Activated B cell treated with CpG ODN at 0.5 μM for 24 hours (primary cell): ENCODE measurements at regions of chr1 and their contacts with region 1.

Region 1: DNA sequence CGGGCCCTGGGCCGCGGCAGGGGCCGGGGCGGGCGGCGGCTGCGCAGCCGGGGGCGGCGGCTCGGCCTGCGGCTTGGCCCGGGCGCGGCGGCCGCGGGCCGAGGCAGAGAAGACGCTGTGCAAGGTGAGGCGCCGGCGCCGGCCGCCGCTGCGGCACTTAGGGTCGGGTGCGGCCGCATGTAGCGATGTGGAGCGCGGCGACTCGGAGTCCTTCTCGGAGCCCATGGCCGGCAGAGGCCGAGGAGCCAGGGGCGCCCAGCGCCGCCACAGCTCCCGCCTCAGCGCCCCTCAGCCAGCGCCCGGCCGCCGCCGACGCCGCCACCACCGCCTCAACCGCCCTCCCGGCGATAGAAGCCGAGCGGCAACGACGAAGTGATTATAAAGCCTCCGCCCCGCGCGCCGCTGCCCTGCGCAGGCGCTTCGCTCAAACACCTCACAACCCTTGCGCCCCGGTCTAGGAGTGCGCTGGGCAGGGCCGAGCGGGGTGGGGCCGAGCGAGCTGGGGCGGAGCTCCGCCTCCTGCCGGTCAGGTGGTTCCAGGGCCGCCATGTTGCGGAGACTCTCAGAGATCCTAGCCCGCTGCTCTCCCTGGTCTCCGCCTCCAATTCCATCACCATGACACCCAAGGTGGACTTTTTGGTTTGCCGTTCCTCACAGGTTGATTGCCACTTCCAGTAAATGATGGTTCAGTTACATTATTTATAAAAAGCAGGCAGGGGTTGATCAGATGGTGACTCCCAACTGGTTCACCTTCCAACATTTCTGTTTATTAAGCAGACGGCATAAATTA is at the start of gene RNF19B:
- DNase-seq: peak; percentile 92
- ATAC-seq: peak; percentile 91
- H3K4me3 Mint-ChIP-seq: peak within 1 kb of the TSS; percentile 90
- H3K27ac Mint-ChIP-seq: peak within 1 kb of the TSS; percentile 91
- H3K4me1 Mint-ChIP-seq: peaks cover 37% of the 10 kb centered on the region
- H3K27me3 Mint-ChIP-seq: no peaks in the 10 kb centered on the region
- CTCF ChIP-seq: no peak
- total RNA-seq, gene RNF19B: 22.7 and 23.6 TPM in 2 replicates

Region 2: GRCh38 chr1:32953495-32953894 is 11.2 kb before region 1 on chr1:
- CTCF ChIA-PET with region 1: interaction called, 7 read pairs
- POLR2A ChIA-PET with region 1: interaction called, 20 read pairs
- intact Hi-C with region 1: loop called (anchors 2 kb)
- DNase-seq: no peak
- ATAC-seq: no peak
- H3K4me3 Mint-ChIP-seq: peak overlapping the region; percentile 19
- H3K27ac Mint-ChIP-seq: no peak overlapping the region
- H3K4me1 Mint-ChIP-seq: peaks cover 72% of the 10 kb centered on the region
- H3K27me3 Mint-ChIP-seq: no peaks in the 10 kb centered on the region
- CTCF ChIP-seq: no peak

Region 3: DNA sequence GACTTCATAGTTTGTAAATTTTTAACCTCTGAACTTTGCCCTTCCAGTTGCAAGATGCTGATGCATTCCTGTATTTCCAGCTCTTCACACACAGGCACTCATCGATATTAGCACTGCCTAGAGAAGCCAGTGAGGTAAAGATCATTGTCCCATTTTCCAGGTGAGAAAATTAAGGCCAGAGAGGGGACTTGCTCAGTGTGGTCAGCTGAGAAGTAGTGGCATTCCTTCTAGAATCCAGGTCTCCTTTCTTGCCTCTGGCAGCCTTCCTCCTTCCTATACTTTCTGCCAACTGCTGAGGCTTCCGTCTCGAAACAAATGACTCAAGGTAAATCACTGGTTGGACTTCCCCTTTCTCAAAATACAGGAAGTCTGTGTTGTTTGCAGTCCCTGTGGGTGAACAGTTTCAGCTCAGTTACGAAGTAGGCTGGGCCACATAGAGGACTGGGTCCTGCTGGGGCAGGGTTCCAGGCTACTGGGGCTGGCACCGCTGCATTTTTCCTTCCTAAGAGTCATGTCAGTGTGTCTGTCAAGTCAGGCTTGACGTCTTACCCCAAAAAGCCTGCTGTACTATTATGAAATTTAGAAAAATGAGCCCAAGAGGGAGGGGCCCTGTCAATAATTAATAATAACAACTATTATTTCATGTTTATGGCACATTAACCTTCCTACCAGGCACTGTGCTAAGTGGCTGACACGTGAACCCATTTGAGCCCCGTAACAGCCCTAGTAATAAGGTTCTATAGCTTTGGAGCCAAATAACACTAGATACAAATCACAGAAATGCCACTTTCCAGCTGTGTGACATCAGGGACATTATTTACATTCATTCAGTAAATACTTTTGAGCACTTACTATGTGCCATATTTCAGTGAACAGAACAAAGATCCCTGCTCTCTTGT is 16.6 kb after region 1 on chr1:
- CTCF ChIA-PET with region 1: interaction called, 3 read pairs
- POLR2A ChIA-PET with region 1: interaction called, 81 read pairs
- intact Hi-C with region 1: loop called (anchors 1 kb)
- DNase-seq: peak; percentile 46
- ATAC-seq: peak; percentile 93
- H3K4me3 Mint-ChIP-seq: peak overlapping the region; percentile 68
- H3K27ac Mint-ChIP-seq: peak overlapping the region; percentile 89
- H3K4me1 Mint-ChIP-seq: peaks cover 55% of the 10 kb centered on the region
- H3K27me3 Mint-ChIP-seq: no peaks in the 10 kb centered on the region
- CTCF ChIP-seq: no peak

Region 4: GRCh38 chr1:33025181-33025571 is 60.5 kb after region 1 on chr1:
- CTCF ChIA-PET with region 1: no interaction called
- POLR2A ChIA-PET with region 1: interaction called, 13 read pairs
- intact Hi-C with region 1: no loop called
- DNase-seq: no peak
- ATAC-seq: no peak
- H3K4me3 Mint-ChIP-seq: no peak overlapping the region
- H3K27ac Mint-ChIP-seq: no peak overlapping the region
- H3K4me1 Mint-ChIP-seq: peaks cover 30% of the 10 kb centered on the region
- H3K27me3 Mint-ChIP-seq: no peaks in the 10 kb centered on the region
- CTCF ChIP-seq: no peak

Region 5: DNA sequence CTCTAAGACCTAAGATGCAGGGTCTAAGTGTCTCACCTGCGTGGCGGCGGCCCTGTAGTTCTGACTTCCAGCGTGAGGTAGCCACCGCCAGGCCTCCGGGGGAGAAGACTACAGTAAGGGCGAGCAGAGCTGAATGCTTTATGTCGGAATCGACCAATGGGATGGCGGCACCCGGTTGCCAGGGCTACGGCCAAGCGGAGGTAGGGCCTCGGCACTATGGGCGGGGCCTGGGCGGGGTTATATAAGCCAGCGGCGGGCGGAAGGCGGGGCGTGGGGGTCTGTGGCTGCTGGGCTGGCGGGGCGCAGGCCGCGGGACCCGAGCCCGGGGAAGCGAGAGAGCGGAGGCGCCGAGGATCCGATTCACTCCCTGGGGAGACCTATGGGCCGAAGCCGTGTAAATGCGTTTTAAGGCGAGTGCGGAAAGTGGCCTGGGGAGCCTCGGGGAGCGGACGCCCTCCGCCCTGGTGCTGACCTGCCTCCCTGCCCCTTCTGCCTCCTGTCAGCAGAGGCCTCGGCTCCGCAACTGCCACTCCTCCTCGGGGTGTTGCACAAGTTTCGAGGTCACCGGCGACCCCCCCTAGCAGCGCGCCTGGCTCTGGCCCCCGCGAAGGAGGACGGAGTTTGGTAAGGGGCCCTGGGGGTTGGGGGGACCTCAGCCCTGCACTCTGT is 116.4 kb after region 1 on chr1 and contains the start of gene AZIN2:
- CTCF ChIA-PET with region 1: no interaction called
- POLR2A ChIA-PET with region 1: interaction called, 5 read pairs
- intact Hi-C with region 1: loop called (anchors 1 kb)
- DNase-seq: peak; percentile 94
- ATAC-seq: peak; percentile 99
- H3K4me3 Mint-ChIP-seq: peak within 1 kb of the TSS; percentile 82
- H3K27ac Mint-ChIP-seq: no peak within 1 kb of the TSS
- H3K4me1 Mint-ChIP-seq: peaks cover 17% of the 10 kb centered on the region
- H3K27me3 Mint-ChIP-seq: peaks cover 3% of the 10 kb centered on the region
- CTCF ChIP-seq: no peak
- total RNA-seq, gene AZIN2: 0.82 and 0.93 TPM in 2 replicates